HEK293T (cell line): ENCODE measurements at regions of chr17 and their contacts with region 1.

Region 1: DNA sequence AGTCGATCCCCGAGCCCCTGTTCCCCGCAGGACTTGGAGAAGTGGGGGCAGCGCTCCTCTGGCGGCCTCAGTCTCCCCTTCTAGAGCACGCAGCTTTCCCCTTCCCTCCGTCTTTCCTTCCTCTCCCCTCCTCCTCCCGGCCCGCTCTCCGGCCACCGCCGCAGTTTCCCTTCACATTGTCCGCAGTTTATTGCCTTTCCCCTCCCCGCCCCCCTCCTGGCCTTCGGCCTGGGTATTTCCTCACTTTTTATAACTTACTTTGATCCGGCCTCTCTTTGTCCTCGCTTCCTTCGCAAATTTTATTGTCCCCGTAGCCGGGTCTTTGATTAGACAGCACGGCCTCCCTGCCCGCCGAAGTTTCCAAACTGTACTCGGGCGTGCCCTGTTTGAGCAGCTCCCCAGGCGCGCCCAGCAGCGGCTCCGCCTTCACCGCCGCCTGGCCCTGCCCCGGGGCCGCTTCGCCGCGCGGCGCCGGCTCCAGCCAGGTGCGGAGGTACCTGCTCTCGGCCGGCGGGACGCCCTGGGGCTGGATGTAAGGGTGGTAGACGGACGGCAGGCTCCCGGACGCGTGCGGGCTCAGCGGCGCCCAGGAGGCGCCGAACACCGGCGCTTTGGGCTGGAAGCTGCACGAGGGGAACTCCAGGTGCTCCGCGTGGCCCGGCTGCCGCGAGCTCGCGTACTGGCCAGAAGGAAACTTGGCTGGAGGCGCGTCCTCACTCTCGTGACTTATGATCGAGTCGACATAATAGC is 488 bp downstream of the HOXB9 start:
- DNase-seq: no peak

Region 2: DNA sequence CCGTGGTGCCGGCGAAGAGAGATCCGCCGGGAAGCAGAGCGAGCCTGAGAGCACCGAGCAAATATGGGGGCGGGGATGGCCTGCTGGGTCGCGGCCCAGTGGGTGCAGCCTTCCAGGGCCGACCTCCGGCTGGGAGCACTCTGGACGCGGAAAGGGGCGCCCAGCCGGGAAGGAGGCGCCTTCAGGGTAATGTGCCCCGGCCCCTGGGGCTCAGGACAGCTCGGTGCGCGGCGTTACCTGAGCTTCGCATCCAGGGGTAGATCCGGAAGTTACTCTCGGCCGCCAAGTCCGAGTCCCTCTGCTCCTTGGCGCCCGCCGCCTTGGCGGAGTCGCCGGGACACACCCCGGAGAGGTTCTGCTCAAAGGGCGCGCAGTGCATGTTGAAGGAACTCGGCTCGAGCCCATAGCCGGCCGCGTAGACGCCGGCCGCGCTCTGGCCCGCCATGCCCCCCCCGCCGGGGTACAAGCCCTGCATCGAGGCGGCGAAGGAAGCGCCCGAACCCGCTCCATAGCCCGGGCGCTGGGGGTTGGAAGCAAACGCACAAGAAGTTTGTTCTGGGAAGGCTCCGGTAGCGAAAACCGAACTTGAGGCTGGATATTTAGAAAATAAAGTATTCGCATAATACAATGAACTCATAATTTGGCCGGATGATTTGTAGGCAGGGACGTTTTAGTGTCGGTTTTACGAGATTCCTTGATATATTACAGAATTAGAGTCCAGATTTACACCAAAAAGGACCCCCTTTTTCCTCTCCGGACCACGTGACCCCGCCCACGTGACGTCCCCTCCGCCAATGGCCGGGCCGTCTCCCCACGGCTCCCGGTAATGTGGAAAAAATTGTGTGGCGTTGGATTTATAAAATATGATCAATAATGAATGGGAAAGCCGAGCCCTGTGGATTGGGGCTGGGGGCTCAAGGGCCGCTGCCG is 15.1 kb before region 1 on chr17 and contains the start of gene HOXB7:
- CTCF ChIA-PET with region 1: interaction called, 3 read pairs
- POLR2A ChIA-PET with region 1: interaction called, 10 read pairs
- DNase-seq: no peak

Region 3: DNA sequence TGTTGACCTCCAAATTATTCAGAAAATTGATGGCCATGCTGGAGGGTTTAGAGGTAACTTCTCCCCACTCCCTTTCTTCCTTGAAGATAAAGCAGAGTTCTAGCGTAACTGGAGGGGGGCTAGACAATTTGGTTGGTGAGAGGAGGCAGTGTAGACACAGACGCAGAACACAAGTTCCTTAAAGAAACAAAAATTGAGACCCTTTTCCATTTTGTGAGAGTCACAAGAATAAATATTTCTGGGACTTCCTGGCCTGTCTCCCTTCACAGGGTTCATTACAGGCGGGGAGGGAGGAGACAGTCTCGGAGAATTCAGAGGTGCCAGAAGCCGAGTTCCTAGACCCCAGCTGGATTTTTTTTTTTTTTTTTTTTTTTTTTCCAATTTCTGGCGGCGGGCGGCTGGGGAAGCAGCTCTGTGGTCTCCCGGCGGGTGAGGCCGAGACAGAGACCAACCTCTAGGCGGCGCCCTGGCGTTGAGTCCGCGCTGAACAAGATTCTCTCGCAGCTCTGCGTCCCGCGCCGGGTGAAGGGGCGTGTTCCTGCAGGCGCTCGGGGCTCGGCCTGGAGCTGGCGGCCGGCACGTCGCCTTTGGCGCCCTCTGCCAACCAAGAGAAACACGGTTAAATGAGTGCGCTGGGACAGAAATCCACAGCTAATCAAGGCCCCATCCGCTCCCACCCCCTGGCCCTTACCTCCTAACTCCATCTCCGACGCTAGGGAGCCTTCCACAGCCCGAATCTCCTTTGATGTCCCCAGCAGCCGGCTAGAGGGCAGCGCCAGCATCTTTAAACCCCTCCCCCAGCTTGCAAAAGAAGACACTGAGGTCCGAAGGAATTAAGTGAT is 10.7 kb after region 1 on chr17:
- CTCF ChIA-PET with region 1: interaction called, 23 read pairs
- POLR2A ChIA-PET with region 1: interaction called, 23 read pairs
- DNase-seq: peak; percentile 78

Region 4: GRCh38 chr17:48646183-48647102 is 20.8 kb after region 1 on chr17:
- CTCF ChIA-PET with region 1: no interaction called
- POLR2A ChIA-PET with region 1: interaction called, 17 read pairs
- DNase-seq: peak; percentile 32